ENCODE measurements at regions of chr9 and their contacts with region 1.

Region 1: GRCh38 chr9:1320607-1321195 is 270.5 kb downstream of the DMRT2 start:
- DNase-seq: no peak
- ATAC-seq: no peak
- H3K4me3 ChIP-seq: no peak overlapping the region
- H3K27ac ChIP-seq: no peak overlapping the region
- H3K4me1 ChIP-seq: no peaks in the 10 kb centered on the region
- H3K27me3 ChIP-seq: no peaks in the 10 kb centered on the region; a peak in 2 of 4 replicates
- CTCF ChIP-seq: no peak
- EP300 ChIP-seq: no peak
- POLR2A ChIP-seq: no peak
- RAD21 ChIP-seq: no peak

Region 2: DNA sequence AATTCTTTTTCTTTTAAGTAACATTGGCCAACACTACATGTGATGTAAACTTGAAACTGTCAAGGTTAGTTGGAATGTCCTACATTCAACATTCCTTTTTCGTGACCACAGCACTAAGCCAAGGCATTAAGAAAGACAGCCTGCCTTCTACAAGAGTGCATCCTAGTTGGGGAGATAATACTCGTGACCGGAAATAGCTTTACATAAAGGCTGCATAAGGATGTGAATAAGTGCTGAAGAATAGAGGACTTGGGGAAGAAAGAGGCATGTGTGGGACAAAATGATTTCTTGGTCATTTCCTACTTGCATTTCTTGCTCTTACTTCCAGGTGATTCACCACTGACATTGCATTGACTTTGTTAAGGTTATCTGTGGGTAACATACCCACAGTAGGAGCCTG is 11.5 kb after region 1 on chr9:
- CTCF ChIA-PET with region 1: interaction called, 4 read pairs
- POLR2A ChIA-PET with region 1: interaction called, 3 read pairs
- RAD21 ChIA-PET with region 1: no interaction called
- SMC1A ChIA-PET with region 1: interaction called, 11 read pairs
- in situ Hi-C with region 1: no loop called
- intact Hi-C with region 1: no loop called
- DNase-seq: no peak
- ATAC-seq: no peak
- H3K4me3 ChIP-seq: no peak overlapping the region
- H3K27ac ChIP-seq: no peak overlapping the region
- H3K4me1 ChIP-seq: no peaks in the 10 kb centered on the region
- H3K27me3 ChIP-seq: no peaks in the 10 kb centered on the region
- CTCF ChIP-seq: no peak
- EP300 ChIP-seq: no peak
- POLR2A ChIP-seq: no peak
- RAD21 ChIP-seq: no peak

Measured in GM12878 (cell line).